Gastrocnemius medialis (tissue), 4 donors: ENCODE measurements at regions of chrX and their contacts with region 1.

Region 1: DNA sequence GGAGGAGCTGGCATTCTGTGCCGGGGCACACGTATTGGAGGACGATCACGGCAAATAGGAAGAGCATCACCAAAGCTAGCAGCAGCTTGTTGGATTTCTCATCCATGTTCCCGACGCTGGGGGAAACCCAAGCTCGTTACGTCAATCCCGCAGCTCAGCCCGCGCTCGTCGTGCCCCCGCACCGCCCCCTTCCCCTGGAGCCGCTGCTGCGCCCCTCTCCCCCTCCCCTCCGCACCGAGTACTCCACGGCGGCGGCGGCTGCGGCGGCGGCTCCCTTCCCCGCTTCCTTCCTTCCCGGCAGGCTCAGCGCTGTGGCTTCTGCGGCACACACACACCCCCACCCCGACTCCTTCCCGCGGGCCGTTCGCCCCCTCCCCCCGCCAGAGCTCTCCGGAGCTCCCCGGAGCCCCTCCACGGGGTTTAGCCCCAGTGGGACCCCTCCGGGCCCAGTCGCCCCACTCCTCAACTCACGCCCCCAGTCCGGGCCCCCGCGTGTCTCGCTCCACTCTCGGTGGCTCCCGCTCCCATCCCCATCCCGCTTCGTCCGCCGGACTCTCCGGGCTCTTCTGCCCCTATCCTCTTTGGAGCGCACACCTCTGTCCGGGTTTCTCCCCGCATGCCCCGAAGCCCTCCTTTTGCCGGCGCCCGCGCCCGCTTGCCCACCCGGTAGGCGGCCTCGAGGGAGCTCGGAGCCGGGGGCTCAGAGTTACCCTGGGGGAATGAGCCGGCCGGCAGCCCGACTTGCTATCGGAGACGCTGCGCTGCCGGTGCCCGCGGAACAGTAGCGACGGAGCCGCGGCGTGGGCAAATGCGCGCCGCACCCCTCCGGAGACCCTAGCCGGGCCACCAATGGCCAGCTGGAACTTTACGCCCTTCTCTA is 978 bp downstream of the HS6ST2 start:
- DNase-seq: no peak
- ATAC-seq: peak in 1 of 2 donors; percentile 49
- H3K4me3 ChIP-seq: peak overlapping the region; percentile 48 to 59 (median 50)
- H3K27ac ChIP-seq: peak overlapping the region in 2 of 4 donors; percentile 37 to 40
- H3K4me1 ChIP-seq: peaks cover 0 to 4% of the 10 kb centered on the region in 2 donors
- H3K27me3 ChIP-seq: peaks cover 0 to 19% (median 8%) of the 10 kb centered on the region in 3 donors
- CTCF ChIP-seq: no peak
- POLR2A ChIP-seq: no peak

Region 2: GRCh38 chrX:132740316-132741123 is 216.9 kb before region 1 on chrX:
- in situ Hi-C with region 1: loop called in 2 of 4 experiments (anchors 25 kb)
- intact Hi-C with region 1: loop called (anchors 5 kb)
- DNase-seq: no peak
- ATAC-seq: peak in 1 of 2 donors; percentile 47
- H3K4me3 ChIP-seq: no peak overlapping the region
- H3K27ac ChIP-seq: no peak overlapping the region
- H3K4me1 ChIP-seq: no peaks in the 10 kb centered on the region
- H3K27me3 ChIP-seq: no peaks in the 10 kb centered on the region
- CTCF ChIP-seq: peak in 4 of 5 experiments; percentile 24 to 61 (median 44)
- POLR2A ChIP-seq: no peak

Region 3: GRCh38 chrX:132848307-132848970 is 109.0 kb before region 1 on chrX:
- in situ Hi-C with region 1: no loop called
- intact Hi-C with region 1: loop called (anchors 10 kb)
- DNase-seq: no peak
- ATAC-seq: no peak
- H3K4me3 ChIP-seq: no peak overlapping the region
- H3K27ac ChIP-seq: no peak overlapping the region
- H3K4me1 ChIP-seq: no peaks in the 10 kb centered on the region
- H3K27me3 ChIP-seq: no peaks in the 10 kb centered on the region
- CTCF ChIP-seq: no peak
- POLR2A ChIP-seq: no peak

Region 4: GRCh38 chrX:132876523-132877338 is 80.7 kb before region 1 on chrX:
- in situ Hi-C with region 1: no loop called
- intact Hi-C with region 1: no loop called
- DNase-seq: no peak
- ATAC-seq: no peak
- H3K4me3 ChIP-seq: no peak overlapping the region
- H3K27ac ChIP-seq: no peak overlapping the region
- H3K4me1 ChIP-seq: no peaks in the 10 kb centered on the region
- H3K27me3 ChIP-seq: no peaks in the 10 kb centered on the region
- CTCF ChIP-seq: no peak
- POLR2A ChIP-seq: no peak